Mucosa of descending colon (tissue), 3 donors: ENCODE measurements at regions of chr18 and their contacts with region 1.

Region 1: DNA sequence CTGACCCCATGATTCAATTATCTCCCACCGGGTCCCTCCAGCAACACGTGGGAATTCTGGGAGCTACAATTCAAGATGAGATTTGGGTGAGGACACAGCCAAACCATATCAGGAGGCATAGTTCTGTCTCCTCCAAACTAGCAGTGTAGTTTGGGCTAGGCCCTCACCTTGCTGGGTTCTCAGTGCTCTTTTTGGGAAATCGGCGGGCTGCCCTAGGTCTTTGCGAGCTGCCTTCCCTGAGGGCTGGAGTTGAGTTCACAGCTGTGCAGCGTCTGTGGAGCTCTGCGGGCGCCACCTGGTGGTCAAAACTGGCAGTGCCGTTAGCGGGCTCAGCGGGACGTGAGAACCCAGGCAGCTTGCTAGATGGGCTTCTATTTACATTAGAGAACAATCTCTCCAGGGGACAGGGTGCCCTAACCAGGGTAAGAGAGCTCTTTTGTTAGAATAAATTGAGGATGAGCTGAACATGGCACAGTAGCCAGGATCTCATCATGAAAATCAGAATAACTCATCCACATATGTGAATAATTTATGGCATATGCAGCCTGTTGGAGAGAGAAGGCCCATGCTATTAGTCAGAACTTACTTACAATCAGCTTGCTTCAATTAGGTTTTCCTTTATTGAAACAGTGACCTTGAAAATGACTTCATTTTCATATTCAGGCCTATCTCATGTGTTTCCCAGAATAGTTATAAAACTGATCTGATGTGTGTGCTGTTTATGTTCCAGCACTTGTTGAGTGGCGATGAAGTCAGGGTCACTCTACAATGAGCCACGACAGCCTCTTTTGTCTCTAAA is 27.4 kb upstream of the YES1 start:
- DNase-seq: peak; percentile 81 to 94 (median 85)
- ATAC-seq: peak; percentile 99
- H3K4me3 ChIP-seq: no peak overlapping the region
- H3K4me1 ChIP-seq: no peaks in the 10 kb centered on the region
- CTCF ChIP-seq: peak; percentile 92

Region 2: DNA sequence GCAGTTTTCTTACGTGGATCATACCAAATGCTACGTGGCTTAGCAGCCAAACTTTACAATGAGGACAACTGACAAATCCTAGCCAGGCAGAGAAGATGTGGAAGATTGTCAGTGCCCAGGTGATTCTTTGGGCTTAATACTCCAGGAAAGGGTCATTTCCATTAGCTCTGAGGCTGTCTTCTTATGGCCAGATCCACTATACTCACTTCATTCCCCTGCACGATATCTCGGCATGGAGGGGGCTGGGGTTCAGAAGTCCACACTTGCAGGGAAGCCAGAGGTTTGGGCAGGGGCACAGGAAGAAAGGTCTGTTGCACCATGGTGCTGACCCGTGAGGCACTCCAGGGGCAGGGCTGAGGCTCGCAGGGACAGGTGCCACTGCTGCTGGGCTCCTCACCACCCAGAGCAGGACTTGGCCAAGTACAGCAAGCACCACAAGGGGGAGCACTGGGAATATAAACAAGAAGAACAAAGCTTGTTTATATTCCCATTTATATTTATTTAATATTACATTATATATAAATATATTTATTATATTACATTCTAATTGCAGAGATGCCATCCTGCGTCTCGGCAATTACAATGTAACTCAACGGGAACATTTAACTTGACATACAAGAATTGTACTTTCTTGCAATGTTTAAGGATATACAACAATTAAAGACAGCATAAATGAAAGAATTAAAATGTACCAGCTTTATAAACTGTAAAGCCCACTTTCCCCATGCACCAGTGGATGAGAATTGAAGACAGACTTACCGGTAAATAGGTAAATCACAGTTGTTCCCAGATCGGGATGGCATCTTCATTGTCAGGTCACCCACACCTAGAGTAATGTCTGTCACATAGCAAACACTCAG is 215.4 kb before region 1 on chr18:
- intact Hi-C with region 1: loop called (anchors 10 kb)
- DNase-seq: peak in 2 of 3 donors; percentile 63 to 90
- ATAC-seq: peak; percentile 86
- H3K4me3 ChIP-seq: no peak overlapping the region
- H3K4me1 ChIP-seq: no peaks in the 10 kb centered on the region
- CTCF ChIP-seq: peak; percentile 54